Posterior vena cava (tissue), 2 donors: ENCODE measurements at regions of chr7 and their contacts with region 1.

Region 1: DNA sequence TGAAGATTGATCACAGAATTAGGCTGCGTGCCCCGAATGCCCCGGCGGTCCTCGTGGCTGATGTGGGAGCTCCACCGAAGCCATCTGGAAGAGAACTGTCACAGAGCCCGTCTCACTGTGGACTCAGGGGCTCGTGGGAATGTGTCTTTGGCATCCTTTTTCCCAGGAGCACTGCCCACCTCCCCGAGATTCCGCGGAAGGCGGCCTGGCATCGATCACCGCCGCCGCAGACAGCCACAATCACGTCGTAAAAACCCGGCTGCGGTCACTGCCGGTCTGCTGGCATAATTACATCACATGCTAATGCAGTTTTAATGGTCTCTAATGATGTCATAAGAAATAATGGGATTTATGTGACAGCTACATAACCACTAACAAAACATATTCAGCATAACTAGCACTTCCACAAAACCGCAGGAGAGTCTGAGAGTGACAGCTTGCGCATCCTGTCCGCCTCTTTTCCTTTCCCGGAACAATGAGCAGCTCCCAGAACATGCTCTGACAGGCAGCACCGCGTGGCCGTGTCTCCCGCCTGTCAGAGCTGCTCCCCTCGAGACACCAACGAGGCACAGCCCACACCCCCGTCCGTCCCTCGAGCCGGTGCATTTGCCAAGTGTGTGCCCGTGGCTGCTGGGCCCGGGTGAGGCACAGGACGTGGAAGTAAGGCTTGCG is 490.0 kb downstream of the PTPRN2 start:
- DNase-seq: peak; percentile 78

Region 2: GRCh38 chr7:157089100-157089610 is 1008.4 kb before region 1 on chr7:
- intact Hi-C with region 1: loop called in 1 of 2 experiments (anchors 5 kb)
- DNase-seq: peak; percentile 71

Region 3: GRCh38 chr7:157932498-157933218 is 164.9 kb before region 1 on chr7:
- intact Hi-C with region 1: no loop called
- DNase-seq: no peak